Heart left ventricle (tissue), 16 donors: ENCODE measurements at regions of chr10 and their contacts with region 1.

Region 1: GRCh38 chr10:60237977-60238758 is 151.5 kb downstream of the ANK3 start:
- DNase-seq: peak in 3 of 5 donors; percentile 10 to 35 (median 23)
- ATAC-seq: peak; percentile 66 to 83 (median 78)
- H3K4me3 ChIP-seq: peak overlapping the region in 2 of 12 donors; percentile 17 to 27
- H3K27ac ChIP-seq: peak overlapping the region in 10 of 12 donors; percentile 14 to 84 (median 72)
- H3K4me1 ChIP-seq: peaks cover 0 to 36% (median 24%) of the 10 kb centered on the region in 12 donors
- H3K27me3 ChIP-seq: no peaks in the 10 kb centered on the region
- CTCF ChIP-seq: peak in 9 of 12 donors; percentile 15 to 46 (median 27)
- POLR2A ChIP-seq: no peak

Region 2: GRCh38 chr10:60291344-60291930 is 53.3 kb after region 1 on chr10:
- intact Hi-C with region 1: loop called in 3 of 10 experiments (anchors 5 kb)
- DNase-seq: no peak
- ATAC-seq: peak in 2 of 4 donors; percentile 17 to 18
- H3K4me3 ChIP-seq: no peak overlapping the region
- H3K27ac ChIP-seq: peak overlapping the region; percentile 21 to 88 (median 58)
- H3K4me1 ChIP-seq: peaks cover 0 to 96% (median 55%) of the 10 kb centered on the region in 12 donors
- H3K27me3 ChIP-seq: no peaks in the 10 kb centered on the region
- CTCF ChIP-seq: no peak
- POLR2A ChIP-seq: no peak

Region 3: GRCh38 chr10:60299961-60300883 is 62.1 kb after region 1 on chr10:
- intact Hi-C with region 1: loop called in 1 of 10 experiments (anchors 5 kb)
- DNase-seq: peak in 4 of 5 donors; percentile 42 to 58 (median 54)
- ATAC-seq: peak; percentile 89 to 94 (median 90)
- H3K4me3 ChIP-seq: peak overlapping the region; percentile 33 to 68 (median 52)
- H3K27ac ChIP-seq: peak overlapping the region; percentile 70 to 88 (median 80)
- H3K4me1 ChIP-seq: peaks cover 0 to 23% (median 10%) of the 10 kb centered on the region in 12 donors
- H3K27me3 ChIP-seq: no peaks in the 10 kb centered on the region
- CTCF ChIP-seq: peak in 8 of 12 donors; percentile 12 to 47 (median 28)
- POLR2A ChIP-seq: peak in 1 of 2 donors; percentile 21